ENCODE measurements at regions of chr22 and their contacts with region 1.

Region 1: GRCh38 chr22:28600546-28601143 is 79.0 kb downstream of the TTC28 start:
- DNase-seq: peak; percentile 77

Region 2: DNA sequence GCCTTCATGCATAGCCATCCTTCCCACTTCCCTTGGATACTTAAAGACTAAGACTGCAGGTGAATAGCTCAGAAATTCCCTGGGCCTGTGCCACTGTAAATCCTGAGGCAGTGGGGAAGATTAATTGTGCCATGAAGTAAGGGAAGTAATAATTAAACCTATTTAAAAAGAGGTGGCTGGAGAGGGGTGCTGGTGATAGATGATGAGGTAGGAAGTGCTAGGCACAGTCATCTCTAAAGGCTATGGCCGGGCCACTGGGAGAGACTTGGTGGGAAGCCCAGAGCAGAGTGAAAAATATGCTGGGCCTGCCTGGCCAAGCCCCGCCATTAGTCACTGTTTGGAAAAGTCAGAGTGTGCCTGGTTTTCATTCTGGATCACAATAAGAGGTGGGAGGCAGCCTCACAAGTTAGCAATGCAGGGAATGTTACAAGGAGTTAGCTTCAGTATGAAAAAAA is 484.4 kb before region 1 on chr22:
- in situ Hi-C with region 1: no loop called
- DNase-seq: no peak

Region 3: GRCh38 chr22:28829358-28830181 is 228.9 kb after region 1 on chr22:
- in situ Hi-C with region 1: loop called (anchors 10 kb)
- DNase-seq: peak; percentile 92

Measured in KBM-7 (cell line).